Calu3 (cell line): ENCODE measurements at regions of chr3 and their contacts with region 1.

Region 1: DNA sequence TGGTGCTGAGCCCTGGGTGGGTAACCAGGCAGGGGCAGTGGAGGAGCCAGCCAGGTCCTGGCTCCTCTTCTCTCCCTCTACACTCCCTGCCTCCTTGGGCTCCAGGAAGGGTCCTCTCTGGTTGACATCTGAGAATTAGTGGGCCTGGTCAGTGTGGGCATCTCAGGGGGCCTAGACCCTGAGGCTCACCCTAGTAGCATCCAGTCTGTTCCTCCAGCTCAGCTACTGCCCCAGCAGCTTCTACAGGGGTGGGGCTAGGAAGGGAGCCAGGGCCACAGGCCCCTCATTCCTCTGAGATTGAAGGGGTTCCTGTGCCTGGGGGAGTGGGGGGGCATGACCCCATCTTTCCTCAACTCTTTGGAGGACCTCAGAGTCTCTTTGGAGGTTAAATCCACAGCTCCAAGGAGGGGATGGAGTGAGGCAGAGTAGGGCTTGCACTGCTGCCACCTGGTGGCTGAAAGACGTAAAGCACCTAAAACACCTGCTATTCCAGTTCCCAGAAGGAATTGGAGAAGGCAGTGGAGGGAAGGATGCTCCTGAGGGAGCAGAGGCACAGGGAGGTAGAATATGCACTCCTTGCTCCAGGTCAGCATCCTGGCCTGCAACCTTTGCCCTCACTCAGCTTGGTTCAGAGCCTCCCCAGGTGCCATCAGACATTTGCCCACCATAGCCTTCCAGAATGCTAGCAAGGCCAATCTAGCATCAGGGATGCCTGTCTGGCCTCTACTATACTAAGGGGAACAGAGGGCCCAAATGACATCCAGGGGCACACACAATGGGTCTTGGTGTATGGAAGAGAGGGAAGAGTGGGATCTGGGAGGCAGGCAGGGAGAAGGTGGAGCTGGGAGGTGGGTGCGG is 25.1 kb downstream of the C3orf18 start:
- DNase-seq: peak; percentile 73
- H3K4me3 Mint-ChIP-seq: no peak overlapping the region
- H3K27ac Mint-ChIP-seq: no peak overlapping the region
- H3K4me1 Mint-ChIP-seq: no peaks in the 10 kb centered on the region
- H3K27me3 Mint-ChIP-seq: peaks cover 46% of the 10 kb centered on the region
- CTCF ChIP-seq: no peak

Region 2: DNA sequence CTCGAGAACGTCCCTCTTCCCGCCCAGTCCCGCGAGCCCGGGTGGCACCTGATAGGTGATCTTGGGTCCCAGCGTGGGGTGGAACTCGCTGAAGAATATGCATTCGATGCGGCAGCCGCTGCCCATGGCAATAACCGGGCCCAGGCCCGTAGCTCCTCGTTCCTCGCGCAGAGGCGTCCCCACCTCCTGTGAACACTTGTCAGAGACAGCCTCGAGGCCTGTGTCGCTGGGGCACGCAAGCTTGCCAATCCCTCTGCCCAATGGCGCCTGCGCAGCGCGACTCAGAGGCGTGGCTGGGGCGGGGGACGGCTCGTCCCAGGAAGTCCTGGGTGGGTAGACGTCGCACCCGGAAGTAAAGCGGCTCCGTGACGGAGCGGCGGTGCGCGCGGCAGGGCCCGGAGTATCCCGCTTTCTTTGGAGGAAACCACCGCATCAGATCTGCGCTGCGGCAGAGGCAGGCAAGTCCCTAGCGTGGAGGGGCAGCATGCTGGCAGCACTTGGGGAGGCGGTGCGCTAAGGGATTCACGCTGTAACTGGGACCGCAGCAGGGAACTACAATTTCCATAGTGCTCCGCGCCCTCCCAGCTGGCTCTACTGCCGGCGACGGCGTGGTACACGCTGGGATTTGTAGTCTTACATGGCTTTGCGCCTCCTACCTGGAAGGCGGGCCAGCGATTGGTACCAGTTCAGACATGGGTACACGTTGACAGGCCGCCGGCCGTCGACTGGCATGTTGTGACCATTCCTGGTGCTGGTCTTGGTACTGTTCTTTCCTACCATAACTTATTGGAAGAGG is 191.7 kb before region 1 on chr3 and contains the starts of genes CYB561D2 and NPRL2:
- CTCF ChIA-PET with region 1: interaction called, 10 read pairs
- intact Hi-C with region 1: loop called (anchors 5 kb)
- DNase-seq: peak; percentile 95
- H3K4me3 Mint-ChIP-seq: peak within 1 kb of the TSS; percentile 84
- H3K27ac Mint-ChIP-seq: peak within 1 kb of the TSS; percentile 13
- H3K4me1 Mint-ChIP-seq: peaks cover 16% of the 10 kb centered on the region
- H3K27me3 Mint-ChIP-seq: no peaks in the 10 kb centered on the region
- CTCF ChIP-seq: no peak
- total RNA-seq, gene CYB561D2: 19.4 and 19.7 TPM in 2 replicates
- total RNA-seq, gene NPRL2: 21.0 and 21.8 TPM in 2 replicates

Region 3: GRCh38 chr3:50370594-50370993 is 171.8 kb before region 1 on chr3:
- CTCF ChIA-PET with region 1: interaction called, 18 read pairs
- intact Hi-C with region 1: loop called (anchors 1 kb)
- DNase-seq: peak; percentile 27
- H3K4me3 Mint-ChIP-seq: no peak overlapping the region
- H3K27ac Mint-ChIP-seq: no peak overlapping the region
- H3K4me1 Mint-ChIP-seq: no peaks in the 10 kb centered on the region
- H3K27me3 Mint-ChIP-seq: peaks cover 63% of the 10 kb centered on the region
- CTCF ChIP-seq: no peak

Region 4: GRCh38 chr3:50436114-50436674 is 106.2 kb before region 1 on chr3:
- CTCF ChIA-PET with region 1: interaction called, 4 read pairs
- intact Hi-C with region 1: loop called (anchors 1 kb)
- DNase-seq: peak; percentile 70
- H3K4me3 Mint-ChIP-seq: no peak overlapping the region
- H3K27ac Mint-ChIP-seq: no peak overlapping the region
- H3K4me1 Mint-ChIP-seq: peaks cover 11% of the 10 kb centered on the region
- H3K27me3 Mint-ChIP-seq: peaks cover 72% of the 10 kb centered on the region
- CTCF ChIP-seq: peak; percentile 38

Region 5: GRCh38 chr3:50519471-50520089 is 22.8 kb before region 1 on chr3:
- CTCF ChIA-PET with region 1: interaction called, 5 read pairs
- intact Hi-C with region 1: loop called (anchors 2 kb)
- DNase-seq: peak; percentile 83
- H3K4me3 Mint-ChIP-seq: no peak overlapping the region
- H3K27ac Mint-ChIP-seq: no peak overlapping the region
- H3K4me1 Mint-ChIP-seq: no peaks in the 10 kb centered on the region
- H3K27me3 Mint-ChIP-seq: peaks cover 100% of the 10 kb centered on the region
- CTCF ChIP-seq: peak; percentile 83